ENCODE measurements at regions of chr11 and their contacts with region 1.

Region 1: GRCh38 chr11:72222907-72223614 is 1.5 kb upstream of the INPPL1 start:
- DNase-seq: peak; percentile 90
- ATAC-seq: peak; percentile 76
- H3K4me3 Mint-ChIP-seq: peak overlapping the region; percentile 87
- H3K27ac Mint-ChIP-seq: peak overlapping the region; percentile 93
- H3K4me1 Mint-ChIP-seq: peaks cover 44% of the 10 kb centered on the region
- H3K27me3 Mint-ChIP-seq: no peaks in the 10 kb centered on the region
- CTCF ChIP-seq: no peak

Region 2: DNA sequence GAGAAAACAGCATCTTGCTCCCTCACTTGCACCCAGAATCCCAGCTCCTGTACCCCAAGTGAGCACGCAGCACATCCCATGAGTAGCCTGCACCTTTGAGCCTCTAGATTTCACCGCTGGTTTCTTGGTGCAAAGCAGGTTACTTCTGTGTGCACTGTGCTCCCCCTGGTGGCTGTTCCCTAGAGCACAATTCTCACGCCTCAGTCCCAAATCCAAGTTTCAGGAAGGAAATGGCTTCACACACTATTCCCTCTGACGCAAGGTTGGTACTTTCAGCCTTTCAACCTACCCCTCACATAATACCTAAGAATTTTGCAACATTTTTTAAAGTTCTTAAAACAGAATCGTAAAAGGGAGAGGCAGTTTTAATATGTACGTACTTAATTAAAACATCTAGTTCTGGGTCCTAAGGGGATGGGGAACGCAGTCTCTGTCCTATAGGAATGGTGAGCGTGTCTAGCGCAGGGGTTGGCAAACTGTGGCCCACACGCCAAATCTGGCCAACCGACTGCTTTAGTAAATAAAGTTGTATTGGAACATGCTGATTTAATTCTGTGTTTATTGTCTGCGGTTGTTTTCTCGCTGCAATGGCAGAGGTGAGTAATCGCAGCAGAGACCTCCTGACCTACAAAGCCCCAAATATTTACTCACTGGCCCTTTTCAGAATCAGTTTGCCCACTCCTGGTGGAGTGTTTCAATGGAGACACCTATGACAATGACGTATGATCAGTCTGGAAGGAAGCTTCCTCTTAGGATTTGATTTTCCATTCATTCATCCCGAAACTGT is 802.4 kb before region 1 on chr11:
- CTCF ChIA-PET with region 1: no interaction called
- POLR2A ChIA-PET with region 1: no interaction called
- intact Hi-C with region 1: no loop called
- DNase-seq: no peak
- ATAC-seq: no peak
- H3K4me3 Mint-ChIP-seq: no peak overlapping the region
- H3K27ac Mint-ChIP-seq: no peak overlapping the region
- H3K4me1 Mint-ChIP-seq: peaks cover 49% of the 10 kb centered on the region
- H3K27me3 Mint-ChIP-seq: peaks cover 2% of the 10 kb centered on the region
- CTCF ChIP-seq: no peak

Region 3: GRCh38 chr11:71787098-71787823 is 435.8 kb before region 1 on chr11:
- CTCF ChIA-PET with region 1: no interaction called
- POLR2A ChIA-PET with region 1: no interaction called
- intact Hi-C with region 1: loop called (anchors 2 kb)
- DNase-seq: peak; percentile 95
- ATAC-seq: peak; percentile 95
- H3K4me3 Mint-ChIP-seq: peak overlapping the region; percentile 95
- H3K27ac Mint-ChIP-seq: peak overlapping the region; percentile 96
- H3K4me1 Mint-ChIP-seq: peaks cover 19% of the 10 kb centered on the region
- H3K27me3 Mint-ChIP-seq: no peaks in the 10 kb centered on the region
- CTCF ChIP-seq: no peak

Region 4: GRCh38 chr11:72040726-72041441 is 182.2 kb before region 1 on chr11:
- CTCF ChIA-PET with region 1: no interaction called
- POLR2A ChIA-PET with region 1: interaction called, 4 read pairs
- intact Hi-C with region 1: loop called (anchors 5 kb)
- DNase-seq: peak; percentile 49
- ATAC-seq: peak; percentile 48
- H3K4me3 Mint-ChIP-seq: no peak overlapping the region
- H3K27ac Mint-ChIP-seq: no peak overlapping the region
- H3K4me1 Mint-ChIP-seq: peaks cover 2% of the 10 kb centered on the region
- H3K27me3 Mint-ChIP-seq: no peaks in the 10 kb centered on the region
- CTCF ChIP-seq: no peak

Region 5: GRCh38 chr11:72102946-72103753 is 119.9 kb before region 1 on chr11 and contains the start of gene LAMTOR1:
- CTCF ChIA-PET with region 1: interaction called, 3 read pairs
- POLR2A ChIA-PET with region 1: no interaction called
- intact Hi-C with region 1: loop called (anchors 2 kb)
- DNase-seq: peak; percentile 93
- ATAC-seq: peak; percentile 96
- H3K4me3 Mint-ChIP-seq: peak within 1 kb of the TSS; percentile 96
- H3K27ac Mint-ChIP-seq: peak within 1 kb of the TSS; percentile 93
- H3K4me1 Mint-ChIP-seq: peaks cover 46% of the 10 kb centered on the region
- H3K27me3 Mint-ChIP-seq: no peaks in the 10 kb centered on the region
- CTCF ChIP-seq: no peak
- total RNA-seq, gene LAMTOR1: 87.2 and 87.6 TPM in 2 replicates

Region 6: DNA sequence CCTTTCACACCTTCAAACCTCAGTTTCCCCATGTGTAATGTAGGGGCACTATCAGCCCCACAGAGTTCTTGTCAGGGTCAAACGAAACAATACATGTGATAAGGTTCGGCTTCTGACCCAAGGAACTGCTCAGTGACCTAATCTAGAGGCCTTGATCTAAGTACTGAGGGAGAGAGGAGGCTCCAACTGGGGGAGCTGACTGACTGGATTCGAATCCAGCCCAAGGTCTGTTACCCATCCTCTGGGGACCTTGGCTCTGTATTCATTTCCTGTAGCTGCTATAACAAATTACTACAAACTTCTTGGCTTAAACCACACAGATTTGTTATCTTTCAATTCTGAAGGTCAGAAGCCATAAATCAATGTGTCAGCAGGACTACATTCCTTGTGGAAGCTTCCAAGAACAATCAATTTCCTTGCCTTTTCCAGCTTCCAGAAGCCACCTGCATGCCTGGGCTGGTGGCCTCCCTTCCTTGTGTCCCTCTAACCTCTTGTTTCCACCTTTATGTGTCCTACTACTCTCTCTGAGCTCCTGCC is 99.9 kb before region 1 on chr11:
- CTCF ChIA-PET with region 1: no interaction called
- POLR2A ChIA-PET with region 1: no interaction called
- intact Hi-C with region 1: no loop called
- DNase-seq: no peak
- ATAC-seq: no peak
- H3K4me3 Mint-ChIP-seq: no peak overlapping the region
- H3K27ac Mint-ChIP-seq: no peak overlapping the region
- H3K4me1 Mint-ChIP-seq: no peaks in the 10 kb centered on the region
- H3K27me3 Mint-ChIP-seq: peaks cover 17% of the 10 kb centered on the region
- CTCF ChIP-seq: no peak

Region 7: GRCh38 chr11:72179804-72180396 is 43.2 kb before region 1 on chr11:
- CTCF ChIA-PET with region 1: interaction called, 5 read pairs
- POLR2A ChIA-PET with region 1: no interaction called
- intact Hi-C with region 1: loop called (anchors 1 kb)
- DNase-seq: no peak
- ATAC-seq: no peak
- H3K4me3 Mint-ChIP-seq: no peak overlapping the region
- H3K27ac Mint-ChIP-seq: no peak overlapping the region
- H3K4me1 Mint-ChIP-seq: peaks cover 4% of the 10 kb centered on the region
- H3K27me3 Mint-ChIP-seq: peaks cover 22% of the 10 kb centered on the region
- CTCF ChIP-seq: no peak

Region 8: GRCh38 chr11:72247584-72247983 is 24.5 kb after region 1 on chr11:
- CTCF ChIA-PET with region 1: no interaction called
- POLR2A ChIA-PET with region 1: no interaction called
- intact Hi-C with region 1: no loop called
- DNase-seq: no peak
- ATAC-seq: no peak
- H3K4me3 Mint-ChIP-seq: no peak overlapping the region
- H3K27ac Mint-ChIP-seq: no peak overlapping the region
- H3K4me1 Mint-ChIP-seq: peaks cover 10% of the 10 kb centered on the region
- H3K27me3 Mint-ChIP-seq: peaks cover 29% of the 10 kb centered on the region
- CTCF ChIP-seq: no peak

Region 9: GRCh38 chr11:72413914-72414628 is 191.0 kb after region 1 on chr11:
- CTCF ChIA-PET with region 1: interaction called, 3 read pairs
- POLR2A ChIA-PET with region 1: interaction called, 3 read pairs
- intact Hi-C with region 1: loop called (anchors 5 kb)
- DNase-seq: peak; percentile 64
- ATAC-seq: peak; percentile 37
- H3K4me3 Mint-ChIP-seq: no peak overlapping the region
- H3K27ac Mint-ChIP-seq: no peak overlapping the region
- H3K4me1 Mint-ChIP-seq: peaks cover 33% of the 10 kb centered on the region
- H3K27me3 Mint-ChIP-seq: no peaks in the 10 kb centered on the region
- CTCF ChIP-seq: no peak

Region 10: DNA sequence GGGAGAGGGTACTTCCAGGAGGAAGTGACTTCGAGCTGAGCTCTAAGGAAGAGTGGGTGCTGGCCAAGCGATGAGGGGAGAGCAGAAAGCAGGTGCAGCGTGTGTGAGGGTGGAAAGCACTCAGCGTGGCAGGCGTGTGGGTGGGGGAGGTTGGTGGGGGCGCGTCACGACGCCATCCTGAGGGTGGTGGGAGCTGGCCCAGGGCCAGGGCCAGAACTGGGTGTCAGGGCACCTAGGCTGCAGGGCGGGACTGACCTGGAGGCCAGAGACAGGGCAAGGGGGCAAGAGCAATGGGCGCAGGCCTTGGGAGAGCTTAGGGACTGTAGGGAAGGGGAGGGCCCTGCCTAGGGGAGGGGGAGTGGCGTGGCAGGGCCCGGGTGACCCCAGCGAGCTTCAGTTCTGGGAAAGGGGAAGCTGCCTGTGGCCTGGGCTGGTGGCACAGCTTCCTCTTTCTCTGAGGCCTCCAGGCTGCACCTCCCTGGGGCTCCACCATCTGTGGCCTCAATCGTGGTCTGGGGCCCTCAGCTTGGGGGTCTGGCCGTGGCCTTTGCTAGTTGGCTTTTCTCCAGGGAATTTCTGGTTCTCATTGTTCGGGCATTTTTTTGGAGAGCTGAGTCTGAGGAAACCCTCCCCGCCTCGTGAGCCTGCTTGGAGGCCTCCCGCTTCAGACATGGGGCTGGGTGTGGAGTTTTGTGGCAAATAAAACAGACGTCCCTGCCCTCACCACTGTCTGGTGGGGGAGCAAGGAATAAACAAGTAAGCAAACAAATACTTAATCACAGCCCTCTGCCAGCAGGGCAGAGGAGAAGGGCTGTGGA is 1162.0 kb after region 1 on chr11:
- CTCF ChIA-PET with region 1: no interaction called
- POLR2A ChIA-PET with region 1: no interaction called
- intact Hi-C with region 1: loop called (anchors 10 kb)
- DNase-seq: peak; percentile 82
- ATAC-seq: peak; percentile 63
- H3K4me3 Mint-ChIP-seq: peak overlapping the region; percentile 76
- H3K27ac Mint-ChIP-seq: peak overlapping the region; percentile 89
- H3K4me1 Mint-ChIP-seq: peaks cover 100% of the 10 kb centered on the region
- H3K27me3 Mint-ChIP-seq: no peaks in the 10 kb centered on the region
- CTCF ChIP-seq: no peak

Measured in activated B cell treated with CpG ODN at 0.5 μM for 24 hours (primary cell).